ENCODE measurements at regions of chr19 and their contacts with region 1.

Region 1: GRCh38 chr19:55146078-55146704 is 2.8 kb downstream of the TNNT1 start:
- DNase-seq: peak in 1 of 2 experiments; percentile 80
- H3K4me3 ChIP-seq: peak overlapping the region; percentile 53 to 83 (median 60)
- H3K27ac ChIP-seq: no peak overlapping the region
- H3K4me1 ChIP-seq: peaks cover 6 to 24% (median 13%) of the 10 kb centered on the region in 4 experiments
- H3K27me3 ChIP-seq: no peaks in the 10 kb centered on the region
- CTCF ChIP-seq: peak; percentile 63 to 80 (median 73)
- EP300 ChIP-seq: peak in 1 of 2 experiments; percentile 36; a peak in 1 of 3 replicates
- POLR2A ChIP-seq: no peak; a peak in 1 of 3 replicates
- RAD21 ChIP-seq: peak; percentile 22 to 45; a peak in 3 of 4 replicates

Region 2: GRCh38 chr19:55027472-55028337 is 118.5 kb before region 1 on chr19:
- CTCF ChIA-PET with region 1: no interaction called
- POLR2A ChIA-PET with region 1: no interaction called
- DNase-seq: no peak
- H3K4me3 ChIP-seq: no peak overlapping the region
- H3K27ac ChIP-seq: no peak overlapping the region
- H3K4me1 ChIP-seq: no peaks in the 10 kb centered on the region
- H3K27me3 ChIP-seq: no peaks in the 10 kb centered on the region
- CTCF ChIP-seq: no peak
- EP300 ChIP-seq: no peak
- POLR2A ChIP-seq: no peak
- RAD21 ChIP-seq: no peak

Region 3: DNA sequence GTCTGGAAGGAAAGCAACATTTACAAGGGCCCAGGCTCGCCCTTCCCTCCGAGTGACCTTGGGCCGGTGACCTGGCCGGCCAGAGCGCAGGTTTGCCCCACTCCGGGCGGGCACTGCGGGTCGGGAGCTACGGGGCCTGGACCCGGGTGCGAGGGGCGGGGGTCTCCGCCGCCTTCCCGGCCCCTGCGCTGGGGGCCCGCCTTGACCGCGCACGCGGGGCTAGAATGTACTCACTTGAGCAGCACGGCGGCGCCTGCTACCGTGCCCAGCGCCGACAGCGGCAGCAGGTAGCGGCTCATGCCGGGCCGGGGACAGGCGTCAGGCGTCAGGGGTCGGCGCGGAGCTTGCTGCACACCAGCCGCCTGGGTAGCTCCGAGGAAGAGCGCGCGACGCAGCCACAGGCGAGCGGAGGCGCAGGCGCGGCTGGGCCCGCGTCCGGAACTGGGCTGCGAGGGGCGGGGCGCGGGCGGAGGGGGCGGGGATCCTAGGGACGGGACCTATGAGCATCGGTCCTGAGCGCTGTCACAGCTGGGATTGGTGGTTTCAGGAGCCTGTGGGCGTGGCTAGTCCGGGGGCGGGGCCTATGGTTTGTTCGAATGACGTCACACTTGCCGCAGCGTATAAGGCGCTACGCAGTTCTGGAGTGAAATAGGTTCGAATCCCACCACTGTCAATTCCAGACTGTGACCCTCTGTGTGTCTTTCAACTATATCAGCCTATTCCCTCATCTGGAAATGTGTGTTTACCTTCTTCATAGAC is 83.3 kb before region 1 on chr19 and contains the start of gene RDH13:
- CTCF ChIA-PET with region 1: no interaction called
- POLR2A ChIA-PET with region 1: no interaction called
- DNase-seq: peak; percentile 90 to 100
- H3K4me3 ChIP-seq: peak within 1 kb of the TSS; percentile 73 to 98 (median 76)
- H3K27ac ChIP-seq: no peak within 1 kb of the TSS
- H3K4me1 ChIP-seq: peaks cover 0 to 4% (median 2%) of the 10 kb centered on the region in 4 experiments; a peak in 4 of 7 replicates
- H3K27me3 ChIP-seq: peaks cover 10 to 35% (median 29%) of the 10 kb centered on the region in 4 experiments
- CTCF ChIP-seq: no peak
- EP300 ChIP-seq: no peak
- POLR2A ChIP-seq: no peak
- RAD21 ChIP-seq: peak in 1 of 2 experiments; percentile 1; a peak in 1 of 4 replicates
- total RNA-seq, gene RDH13: 29.4 and 31.5 TPM in 2 replicates

Region 4: DNA sequence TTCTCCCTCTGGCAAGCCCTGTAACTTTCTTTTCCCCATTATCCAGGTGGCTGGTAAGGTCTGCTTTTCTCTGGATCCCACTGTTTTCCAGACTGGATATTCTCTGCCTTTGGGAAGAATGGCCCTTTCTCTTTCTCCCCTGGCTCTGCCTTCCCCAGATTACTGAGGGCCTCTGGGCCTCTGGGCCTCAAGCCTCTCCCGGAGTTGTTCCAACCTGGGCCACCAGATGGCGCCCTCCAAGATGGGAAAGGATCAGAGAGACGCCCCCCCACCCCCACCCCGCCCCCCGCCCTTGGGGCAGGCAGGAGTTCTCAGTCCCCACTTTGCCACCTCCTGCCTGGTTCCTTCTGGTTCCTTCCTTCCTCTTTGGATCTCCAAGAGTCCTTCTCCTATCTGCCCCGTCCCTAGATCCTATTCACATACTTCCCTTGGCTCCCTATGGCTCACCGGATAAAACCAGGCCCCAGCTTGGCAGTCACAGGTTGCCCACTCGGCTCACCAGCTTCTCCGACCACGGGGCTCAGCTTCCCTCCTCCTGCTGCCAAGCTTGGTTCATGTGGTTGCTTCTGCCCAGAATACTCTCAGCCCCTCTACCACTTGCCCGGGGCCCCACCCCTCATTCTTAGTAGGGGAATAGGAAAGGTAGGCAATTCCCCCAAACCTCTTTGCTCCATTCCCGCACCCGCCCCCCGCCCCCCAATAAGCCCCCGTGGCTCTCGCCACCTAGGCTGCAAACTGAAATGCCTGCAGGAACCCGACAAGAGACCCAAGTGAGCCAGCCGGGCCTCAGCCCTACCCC is 57.4 kb before region 1 on chr19:
- CTCF ChIA-PET with region 1: interaction called, 11 read pairs
- POLR2A ChIA-PET with region 1: interaction called, 6 read pairs
- DNase-seq: peak in 1 of 2 experiments; percentile 99
- H3K4me3 ChIP-seq: 0 out of 8 replicates have a peak overlapping the region, but pooled peaks of 1 of the 4 experiments have one; percentile 84
- H3K27ac ChIP-seq: no peak overlapping the region
- H3K4me1 ChIP-seq: peaks cover 0 to 37% (median 24%) of the 10 kb centered on the region in 4 experiments; a peak in 6 of 7 replicates
- H3K27me3 ChIP-seq: peaks cover 0 to 3% (median 1%) of the 10 kb centered on the region in 4 experiments; a peak in 3 of 7 replicates
- CTCF ChIP-seq: peak; percentile 57 to 59 (median 58)
- EP300 ChIP-seq: no peak
- POLR2A ChIP-seq: no peak; a peak in 1 of 3 replicates
- RAD21 ChIP-seq: peak; percentile 12 to 41; a peak in 3 of 4 replicates

Region 5: DNA sequence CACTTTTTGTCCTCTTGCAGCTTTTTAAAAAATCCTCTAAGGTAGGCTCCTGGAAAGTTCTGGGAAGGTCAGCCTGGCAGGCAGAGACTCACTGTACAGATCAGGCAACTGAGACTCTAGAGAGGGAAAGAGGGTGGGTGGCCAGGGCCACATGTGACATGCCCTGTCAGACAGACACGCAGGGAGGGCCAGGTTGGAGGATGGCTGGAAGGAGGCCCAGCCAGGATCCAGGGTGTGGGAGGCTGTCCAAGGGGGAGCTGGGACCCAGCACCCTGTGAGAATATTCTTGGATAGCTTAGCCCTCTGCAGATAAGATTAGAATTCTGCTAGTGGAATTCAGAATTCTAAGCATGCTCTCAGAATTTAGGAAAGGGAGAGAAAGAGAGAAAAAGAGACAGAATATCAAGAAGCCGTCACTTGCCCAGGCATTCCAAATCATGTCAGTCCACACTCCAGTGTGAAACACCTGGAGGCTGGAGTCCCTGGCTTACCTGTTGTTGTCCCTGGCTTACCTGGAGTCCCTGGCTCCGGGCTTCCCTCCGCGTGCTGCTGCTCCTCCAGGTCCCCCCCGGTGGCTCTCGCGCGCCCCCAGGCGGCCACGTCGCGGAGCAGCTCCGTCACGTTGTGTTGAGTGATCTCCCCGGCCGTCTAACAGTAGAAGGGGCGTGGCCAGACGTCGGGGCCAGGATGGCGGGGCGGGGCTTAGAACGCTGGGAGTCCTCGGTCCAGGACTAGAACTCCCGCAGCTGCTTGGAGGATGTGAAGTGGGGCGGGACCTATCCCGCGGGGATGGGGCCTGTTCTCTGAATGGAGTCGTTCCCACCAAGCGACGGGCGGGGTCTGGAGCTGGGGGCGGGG is 14.2 kb after region 1 on chr19:
- CTCF ChIA-PET with region 1: interaction called, 118 read pairs
- POLR2A ChIA-PET with region 1: interaction called, 19 read pairs
- DNase-seq: peak; percentile 96 to 100
- H3K4me3 ChIP-seq: peak overlapping the region in 1 of 4 experiments; percentile 65; a peak in 2 of 8 replicates
- H3K27ac ChIP-seq: no peak overlapping the region
- H3K4me1 ChIP-seq: peaks cover 3 to 25% (median 9%) of the 10 kb centered on the region in 4 experiments
- H3K27me3 ChIP-seq: peaks cover 5 to 16% (median 14%) of the 10 kb centered on the region in 4 experiments; a peak in 6 of 7 replicates
- CTCF ChIP-seq: peak; percentile 93 to 98 (median 96)
- EP300 ChIP-seq: no peak; a peak in 1 of 3 replicates
- POLR2A ChIP-seq: no peak
- RAD21 ChIP-seq: peak; percentile 90 to 97

Region 6: GRCh38 chr19:55173714-55174409 is 27.7 kb after region 1 on chr19:
- CTCF ChIA-PET with region 1: interaction called, 28 read pairs
- POLR2A ChIA-PET with region 1: interaction called, 14 read pairs
- DNase-seq: peak in 1 of 2 experiments; percentile 99
- H3K4me3 ChIP-seq: peak overlapping the region; percentile 60 to 77 (median 73)
- H3K27ac ChIP-seq: no peak overlapping the region
- H3K4me1 ChIP-seq: peaks cover 5 to 21% (median 14%) of the 10 kb centered on the region in 4 experiments
- H3K27me3 ChIP-seq: peaks cover 2 to 51% (median 28%) of the 10 kb centered on the region in 4 experiments; a peak in 6 of 7 replicates
- CTCF ChIP-seq: peak in 1 of 3 experiments; percentile 0; a peak in 1 of 4 replicates
- EP300 ChIP-seq: no peak
- POLR2A ChIP-seq: no peak
- RAD21 ChIP-seq: no peak

Region 7: GRCh38 chr19:55270172-55270942 is 124.2 kb after region 1 on chr19:
- CTCF ChIA-PET with region 1: no interaction called
- POLR2A ChIA-PET with region 1: no interaction called
- DNase-seq: no peak
- H3K4me3 ChIP-seq: no peak overlapping the region
- H3K27ac ChIP-seq: no peak overlapping the region
- H3K4me1 ChIP-seq: peaks cover 0 to 3% (median 0%) of the 10 kb centered on the region in 4 experiments; a peak in 1 of 7 replicates
- H3K27me3 ChIP-seq: no peaks in the 10 kb centered on the region
- CTCF ChIP-seq: no peak
- EP300 ChIP-seq: no peak
- POLR2A ChIP-seq: no peak
- RAD21 ChIP-seq: no peak

Region 8: DNA sequence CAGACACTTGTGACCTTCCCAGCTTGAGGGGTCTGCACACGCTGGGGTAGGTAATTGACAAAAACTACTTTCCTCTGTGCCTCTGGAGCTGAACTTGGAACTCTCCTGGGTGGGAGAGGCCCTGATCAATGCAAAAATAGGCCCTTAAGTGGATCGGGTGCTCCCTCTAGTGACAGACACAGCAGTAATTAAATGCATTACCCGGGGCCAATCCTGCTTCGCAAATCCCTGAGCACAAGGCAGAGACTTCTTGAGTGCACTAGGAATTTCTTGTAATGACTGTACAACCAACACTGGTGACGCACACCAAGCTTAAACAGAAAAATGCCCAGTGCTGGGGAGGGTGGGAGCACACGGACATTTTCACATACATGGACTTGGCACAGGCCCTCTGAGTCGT is 272.0 kb after region 1 on chr19:
- CTCF ChIA-PET with region 1: interaction called, 15 read pairs
- POLR2A ChIA-PET with region 1: no interaction called
- DNase-seq: peak; percentile 41 to 71
- H3K4me3 ChIP-seq: no peak overlapping the region
- H3K27ac ChIP-seq: no peak overlapping the region
- H3K4me1 ChIP-seq: peaks cover 0 to 2% (median 0%) of the 10 kb centered on the region in 4 experiments; a peak in 1 of 7 replicates
- H3K27me3 ChIP-seq: peaks cover 0 to 9% (median 2%) of the 10 kb centered on the region in 4 experiments; a peak in 2 of 7 replicates
- CTCF ChIP-seq: peak; percentile 45 to 85 (median 72)
- EP300 ChIP-seq: no peak
- POLR2A ChIP-seq: no peak
- RAD21 ChIP-seq: peak; percentile 93 to 97

Measured in H1 (cell line).